Left ventricle myocardium superior (tissue), 1 donor: ENCODE measurements at regions of chr5 and their contacts with region 1.

Region 1: GRCh38 chr5:97162045-97162444 is 19.6 kb upstream of the LIX1 start:
- DNase-seq: no peak
- ATAC-seq: peak; percentile 73

Region 2: GRCh38 chr5:96614110-96614691 is 547.8 kb before region 1 on chr5:
- intact Hi-C with region 1: loop called (anchors 10 kb)
- DNase-seq: no peak
- ATAC-seq: peak; percentile 83

Region 3: DNA sequence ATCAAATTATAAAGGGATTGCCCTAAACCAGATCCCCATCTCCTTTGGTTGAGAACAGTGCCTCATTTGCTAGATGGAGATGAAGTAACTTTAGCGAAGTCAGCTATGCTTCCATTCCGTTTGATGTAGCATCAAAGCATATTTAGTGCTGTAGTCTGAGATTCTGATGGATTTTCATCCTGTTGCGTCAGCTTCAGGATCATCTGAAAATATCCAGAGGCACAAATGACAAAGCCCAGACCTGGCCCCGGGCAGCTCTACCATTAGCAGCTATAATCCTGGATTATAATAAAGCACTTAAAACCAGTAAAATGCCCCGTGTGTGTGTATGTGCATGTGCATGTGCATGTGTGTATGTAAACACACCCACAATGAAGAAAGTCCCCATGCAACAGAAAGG is 399.0 kb before region 1 on chr5:
- intact Hi-C with region 1: loop called (anchors 10 kb)
- DNase-seq: no peak
- ATAC-seq: no peak

Region 4: DNA sequence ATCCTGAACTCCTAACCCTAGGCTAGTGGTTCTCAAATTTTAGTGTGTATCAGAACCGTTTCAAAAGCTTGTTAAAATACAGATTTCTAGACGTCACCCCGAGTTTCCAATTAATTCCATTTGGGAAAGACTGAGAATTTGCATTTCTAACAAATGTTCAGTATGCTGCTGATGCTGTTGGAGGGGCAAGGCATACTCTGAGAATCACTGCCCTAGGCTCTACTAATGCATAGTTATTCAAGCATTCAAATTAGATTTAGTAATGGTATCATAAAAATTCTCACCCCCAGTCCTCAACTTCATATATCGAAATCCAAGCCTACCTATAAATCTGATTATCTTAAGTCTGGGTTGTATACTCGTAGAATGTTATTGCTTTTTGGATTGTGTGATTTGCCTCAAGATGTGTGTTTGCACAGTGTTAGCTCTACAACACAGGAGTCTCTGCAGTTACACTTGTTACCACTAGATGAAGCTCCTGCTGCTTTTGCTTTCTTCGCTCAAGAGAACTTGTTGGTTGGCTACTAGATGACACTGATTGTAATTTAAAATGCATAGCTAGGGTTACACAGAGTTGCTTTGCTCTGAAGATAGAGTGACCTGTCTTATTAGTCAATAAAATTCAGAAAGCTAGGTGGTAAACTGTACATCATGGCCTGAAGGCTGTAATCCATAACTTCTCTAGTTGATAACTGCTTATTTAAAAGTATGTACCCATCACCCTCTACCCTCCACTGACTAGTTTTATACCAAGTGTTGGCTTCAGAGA is 293.3 kb before region 1 on chr5:
- intact Hi-C with region 1: loop called (anchors 2 kb)
- DNase-seq: no peak
- ATAC-seq: peak; percentile 88